H1 (cell line): ENCODE measurements at regions of chr11 and their contacts with region 1.

Region 1: GRCh38 chr11:96827164-96827563 is 437.4 kb downstream of the JRKL start:
- DNase-seq: peak in 1 of 2 experiments; percentile 2
- H3K4me3 ChIP-seq: no peak overlapping the region
- H3K27ac ChIP-seq: no peak overlapping the region
- H3K4me1 ChIP-seq: no peaks in the 10 kb centered on the region
- H3K27me3 ChIP-seq: no peaks in the 10 kb centered on the region
- CTCF ChIP-seq: peak in 2 of 3 experiments; percentile 36 to 46; a peak in 2 of 4 replicates
- EP300 ChIP-seq: no peak
- POLR2A ChIP-seq: no peak
- RAD21 ChIP-seq: peak; percentile 65 to 81

Region 2: GRCh38 chr11:97140885-97141494 is 313.8 kb after region 1 on chr11:
- CTCF ChIA-PET with region 1: interaction called, 16 read pairs
- POLR2A ChIA-PET with region 1: no interaction called
- DNase-seq: no peak
- H3K4me3 ChIP-seq: no peak overlapping the region
- H3K27ac ChIP-seq: no peak overlapping the region
- H3K4me1 ChIP-seq: no peaks in the 10 kb centered on the region
- H3K27me3 ChIP-seq: peaks cover 0 to 1% (median 0%) of the 10 kb centered on the region in 4 experiments; a peak in 1 of 7 replicates
- CTCF ChIP-seq: peak in 2 of 3 experiments; percentile 57 to 60; a peak in 2 of 4 replicates
- EP300 ChIP-seq: no peak
- POLR2A ChIP-seq: no peak
- RAD21 ChIP-seq: peak; percentile 76 to 82